Posterior vena cava (tissue), 2 donors: ENCODE measurements at regions of chr11 and their contacts with region 1.

Region 1: DNA sequence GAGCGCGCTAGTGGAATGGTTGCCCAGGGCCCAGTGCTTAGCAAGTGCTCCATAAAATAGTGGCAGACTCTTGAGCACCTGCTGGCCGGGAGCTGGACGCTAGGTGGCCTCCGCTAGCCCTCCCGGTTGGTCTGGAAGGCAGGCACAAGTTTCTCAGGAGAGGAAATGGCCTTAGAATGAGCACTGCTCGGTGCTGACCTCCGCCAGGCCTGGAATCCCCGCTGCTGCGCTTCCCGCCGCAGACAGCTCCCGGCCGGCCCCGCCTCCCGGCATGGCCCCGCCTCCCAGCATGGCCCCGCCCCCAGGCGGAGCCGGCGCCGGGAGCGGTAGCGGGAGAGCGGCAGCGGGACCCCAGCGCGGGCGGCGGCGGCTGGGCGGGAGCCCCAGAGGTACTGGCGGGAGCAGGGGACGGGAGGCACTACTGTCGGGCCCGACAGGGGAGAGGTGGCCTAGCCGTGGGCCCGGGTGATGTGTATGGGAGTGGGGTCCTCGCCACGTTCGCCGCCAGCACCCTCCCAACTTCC is at the start of gene SIPA1:
- DNase-seq: peak; percentile 93
- total RNA-seq, gene SIPA1: 62.9 to 64.2 TPM

Region 2: DNA sequence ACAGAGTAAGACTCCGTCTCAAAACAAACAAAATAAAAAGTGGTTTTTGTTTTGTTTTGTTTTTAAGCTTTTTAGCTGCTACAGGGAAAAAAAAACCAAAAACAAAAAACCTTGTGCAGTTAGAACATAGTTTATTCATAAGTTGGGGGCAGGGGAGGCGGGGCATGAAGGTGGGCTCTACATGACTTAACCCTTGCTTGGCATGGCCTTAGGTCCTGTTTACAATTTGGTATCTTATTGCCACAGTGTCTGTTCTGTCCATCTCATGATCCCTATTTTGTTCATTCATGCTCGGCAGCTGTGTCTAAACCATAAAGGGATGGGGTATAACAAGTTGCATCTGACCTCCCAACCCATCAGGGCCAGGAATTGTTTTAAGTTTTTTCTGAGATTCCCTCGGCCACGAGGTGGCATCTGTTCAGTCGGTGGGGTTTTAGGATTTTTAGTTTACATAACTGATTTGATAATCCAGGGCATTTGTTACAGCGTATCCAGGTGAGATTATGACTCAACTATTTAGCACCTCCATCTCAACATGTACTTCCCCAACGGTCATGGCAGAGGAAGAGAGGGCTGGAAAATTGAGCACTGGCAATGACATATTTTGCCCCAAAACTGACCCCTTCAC is 136.0 kb after region 1 on chr11:
- intact Hi-C with region 1: loop called in 1 of 2 experiments (anchors 5 kb)
- DNase-seq: peak; percentile 55

Region 3: GRCh38 chr11:65997286-65997685 is 359.4 kb after region 1 on chr11:
- intact Hi-C with region 1: loop called in 1 of 2 experiments (anchors 10 kb)
- DNase-seq: no peak